ENCODE measurements at regions of chr2 and their contacts with region 1.

Region 1: DNA sequence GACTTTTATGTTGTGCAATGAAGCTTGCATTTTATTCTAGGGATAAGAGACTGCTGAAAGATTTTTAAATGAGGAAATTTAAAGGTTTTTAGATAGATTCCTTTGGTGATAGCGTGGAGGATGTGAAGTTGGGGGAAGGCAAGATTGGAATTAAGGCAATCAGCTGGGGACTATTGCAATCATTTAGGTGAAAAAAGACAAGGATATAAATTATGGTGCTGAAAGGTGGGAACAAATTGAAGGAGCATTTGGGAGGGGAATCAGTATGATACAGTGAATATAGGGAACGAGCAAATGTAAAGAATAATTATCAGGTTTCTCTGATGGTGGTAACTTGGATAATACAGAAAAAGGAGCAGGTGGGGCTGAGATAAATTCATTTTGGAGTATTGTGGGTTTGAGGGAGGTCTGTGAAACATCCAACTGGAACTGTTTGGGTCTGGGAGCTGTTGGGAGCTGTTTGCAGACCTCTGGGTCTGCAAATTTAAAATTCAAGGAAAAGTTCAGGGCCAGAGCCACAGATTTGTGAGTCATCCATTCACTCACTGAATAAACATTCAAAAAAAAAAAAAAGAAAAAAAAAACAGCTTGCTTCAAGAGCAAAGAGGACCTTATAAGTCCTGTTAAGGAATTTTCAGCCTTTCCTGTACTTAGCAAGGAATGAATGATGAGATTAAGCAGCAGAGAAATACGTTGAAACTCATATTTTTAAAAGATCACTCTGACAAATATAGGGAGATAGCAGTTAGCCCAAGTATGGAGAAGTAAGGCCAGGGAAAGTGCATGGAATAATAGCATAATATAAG is 257.5 kb upstream of the FN1 start:
- DNase-seq: peak; percentile 38
- H3K4me3 ChIP-seq: no peak overlapping the region
- H3K27me3 ChIP-seq: no peaks in the 10 kb centered on the region
- CTCF ChIP-seq: no peak

Region 2: GRCh38 chr2:215435280-215435808 is 258.1 kb before region 1 on chr2:
- CTCF ChIA-PET with region 1: interaction called, 7 read pairs
- POLR2A ChIA-PET with region 1: interaction called, 23 read pairs
- DNase-seq: no peak
- H3K4me3 ChIP-seq: peak overlapping the region; percentile 98
- H3K27me3 ChIP-seq: no peaks in the 10 kb centered on the region
- CTCF ChIP-seq: no peak

Measured in BJ (cell line).